ENCODE measurements at regions of chr1 and their contacts with region 1.

Region 1: GRCh38 chr1:31296486-31297276 is at the starts of genes SNRNP40 and ZCCHC17:
- DNase-seq: peak; percentile 99

Region 2: GRCh38 chr1:31272369-31272768 is 24.3 kb before region 1 on chr1:
- CTCF ChIA-PET with region 1: no interaction called
- POLR2A ChIA-PET with region 1: interaction called, 10 read pairs
- DNase-seq: no peak

Region 3: DNA sequence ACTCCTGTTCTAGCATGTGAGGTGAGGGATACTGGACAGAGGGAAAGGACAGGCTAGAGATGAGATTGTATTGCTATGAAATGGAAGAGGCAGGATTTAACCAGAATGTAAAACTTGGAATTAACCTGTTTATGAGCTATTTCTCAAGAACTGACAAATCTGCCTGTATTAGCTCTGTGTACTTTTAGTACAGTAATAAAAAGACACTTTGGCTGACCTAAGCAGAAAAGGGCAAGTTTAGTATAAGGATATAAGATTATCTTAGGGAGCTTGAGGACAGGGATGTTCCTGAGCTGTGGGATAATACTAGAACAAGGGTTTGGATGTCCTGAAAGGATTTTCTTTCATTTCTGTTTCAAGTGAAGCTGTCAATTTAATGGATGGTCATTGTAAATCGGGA is 11.4 kb after region 1 on chr1:
- CTCF ChIA-PET with region 1: no interaction called
- POLR2A ChIA-PET with region 1: interaction called, 11 read pairs
- DNase-seq: no peak

Region 4: DNA sequence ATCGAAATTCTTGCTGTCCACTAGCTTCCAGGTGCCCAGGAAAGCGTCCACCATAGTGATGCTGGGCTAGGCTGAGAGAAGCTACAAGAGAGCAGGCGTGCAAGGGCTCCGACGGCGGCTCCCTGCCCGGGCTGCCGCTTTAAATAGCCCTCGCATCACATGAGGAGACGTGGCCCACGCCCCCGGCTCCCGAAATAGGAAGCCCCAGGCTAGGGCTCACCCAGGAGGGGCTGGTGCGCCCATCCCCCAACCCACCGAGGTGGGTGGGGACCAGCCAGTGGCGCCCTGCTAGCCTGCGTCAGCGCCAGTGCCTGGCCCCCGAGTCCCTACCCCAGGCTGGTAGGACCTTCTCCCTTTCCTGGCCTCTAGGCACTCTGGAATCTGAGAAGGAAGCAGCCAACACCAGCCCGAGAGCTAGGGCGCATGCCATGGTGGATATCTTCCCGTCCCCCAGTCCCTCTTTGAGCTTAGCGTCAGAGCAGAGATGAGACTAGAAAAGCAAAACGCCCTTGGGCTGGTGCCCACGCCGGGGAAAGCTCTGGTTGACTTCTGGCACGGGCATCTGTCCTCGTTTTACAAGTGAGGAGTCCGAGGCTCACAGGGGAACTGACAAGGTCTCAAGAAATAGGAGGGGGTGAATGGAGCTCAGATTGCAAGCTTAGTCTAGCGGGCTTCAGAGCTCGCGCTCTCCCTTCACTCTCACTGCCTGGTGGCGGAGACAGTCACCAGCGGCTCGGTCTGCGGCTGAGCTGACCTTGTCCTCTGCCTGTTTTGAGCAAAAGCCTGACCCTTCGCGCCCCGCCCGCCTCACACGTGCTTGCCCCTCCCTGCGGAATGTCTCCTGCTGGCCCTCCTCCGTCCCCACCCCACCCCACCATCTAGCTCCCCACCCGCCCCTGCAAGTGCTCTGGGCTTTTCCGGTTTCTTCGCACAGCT is 76.5 kb after region 1 on chr1 and contains the start of gene FABP3:
- CTCF ChIA-PET with region 1: interaction called, 3 read pairs
- POLR2A ChIA-PET with region 1: interaction called, 20 read pairs
- DNase-seq: peak; percentile 77

Measured in HEK293T (cell line).